Cardiac septum (tissue), 1 donor: ENCODE measurements at regions of chr5 and their contacts with region 1.

Region 1: GRCh38 chr5:142548739-142549275 is 137.1 kb downstream of the FGF1 start:
- DNase-seq: no peak

Region 2: DNA sequence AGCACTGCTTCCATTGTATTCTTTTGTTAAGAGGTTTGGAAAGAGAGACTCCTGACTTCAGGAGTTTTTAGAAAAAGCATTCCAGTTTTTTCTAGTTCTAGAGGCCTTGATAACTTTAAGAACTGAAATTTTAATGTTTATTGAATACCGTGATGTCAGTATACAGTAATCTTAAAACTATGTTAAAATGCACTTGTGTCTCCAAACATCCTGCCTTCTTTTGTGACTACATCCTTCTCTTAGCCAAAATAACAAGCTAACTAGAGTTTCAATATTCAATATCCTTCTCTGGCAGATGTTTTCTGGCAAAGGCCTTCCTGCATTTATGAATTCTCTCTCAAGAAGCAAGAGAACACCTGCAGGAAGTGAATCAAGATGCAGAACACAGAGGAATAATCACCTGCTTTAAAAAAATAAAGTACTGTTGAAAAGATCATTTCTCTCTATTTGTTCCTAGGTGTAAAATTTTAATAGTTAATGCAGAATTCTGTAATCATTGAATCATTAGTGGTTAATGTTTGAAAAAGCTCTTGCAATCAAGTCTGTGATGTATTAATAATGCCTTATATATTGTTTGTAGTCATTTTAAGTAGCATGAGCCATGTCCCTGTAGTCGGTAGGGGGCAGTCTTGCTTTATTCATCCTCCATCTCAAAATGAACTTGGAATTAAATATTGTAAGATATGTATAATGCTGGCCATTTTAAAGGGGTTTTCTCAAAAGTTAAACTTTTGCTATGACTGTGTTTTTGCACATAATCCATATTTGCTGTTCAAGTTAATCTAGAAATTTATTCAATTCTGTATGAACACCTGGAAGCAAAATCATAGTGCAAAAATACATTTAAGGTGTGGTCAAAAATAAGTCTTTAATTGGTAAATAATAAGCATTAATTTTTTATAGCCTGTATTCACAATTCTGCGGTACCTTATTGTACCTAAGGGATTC is 397.1 kb before region 1 on chr5:
- intact Hi-C with region 1: loop called (anchors 1 kb)
- DNase-seq: no peak

Region 3: GRCh38 chr5:142167458-142167857 is 381.3 kb before region 1 on chr5:
- intact Hi-C with region 1: loop called (anchors 5 kb)
- DNase-seq: no peak

Region 4: DNA sequence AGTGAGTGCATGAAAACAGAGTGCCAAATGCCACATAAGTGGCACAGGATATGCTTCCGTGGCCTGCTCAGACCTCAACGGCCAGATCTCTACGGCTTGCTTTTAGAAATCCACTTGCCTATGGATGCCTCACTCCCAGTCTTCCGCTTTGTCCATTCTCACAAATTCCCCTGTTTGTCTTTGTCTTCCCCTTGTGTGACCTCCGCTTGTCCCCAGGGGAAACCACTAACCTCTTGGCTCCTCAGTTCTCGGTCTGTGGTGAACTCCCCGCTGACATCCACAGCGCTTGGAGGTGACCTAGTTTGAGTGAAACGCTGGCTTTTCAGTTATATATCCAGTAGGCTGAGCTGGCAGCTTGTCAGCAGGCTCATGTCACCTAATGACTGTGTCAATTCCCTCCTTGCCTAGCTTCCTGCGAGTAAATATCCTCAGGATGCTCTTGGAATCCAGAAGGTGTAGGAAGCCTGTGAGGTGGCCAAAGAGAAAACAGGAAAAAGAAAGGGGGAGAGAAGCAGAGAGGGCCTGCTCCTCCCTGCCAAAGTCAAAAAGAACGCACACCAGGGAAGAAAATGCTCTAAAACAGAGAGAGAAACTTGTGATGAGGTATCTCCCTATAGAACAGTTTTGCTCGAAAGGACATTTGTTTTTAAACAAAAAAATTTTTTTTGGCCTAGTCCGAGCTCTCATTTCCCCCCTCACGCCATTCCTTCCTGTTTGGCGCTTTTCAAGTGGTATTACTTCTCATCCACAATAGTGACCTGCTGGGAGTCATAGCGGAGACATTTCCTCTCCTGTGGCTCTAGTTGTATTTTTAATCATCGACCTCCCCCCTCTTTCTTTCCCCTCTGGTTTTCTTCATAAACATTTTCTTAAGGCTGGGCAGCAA is 122.4 kb before region 1 on chr5:
- intact Hi-C with region 1: loop called (anchors 5 kb)
- DNase-seq: no peak

Region 5: GRCh38 chr5:142512043-142513042 is 36.5 kb before region 1 on chr5:
- intact Hi-C with region 1: no loop called
- DNase-seq: no peak

Region 6: GRCh38 chr5:142597546-142598341 is 48.9 kb after region 1 on chr5:
- intact Hi-C with region 1: no loop called
- DNase-seq: no peak